ENCODE measurements at regions of chr2 and their contacts with region 1.

Region 1: DNA sequence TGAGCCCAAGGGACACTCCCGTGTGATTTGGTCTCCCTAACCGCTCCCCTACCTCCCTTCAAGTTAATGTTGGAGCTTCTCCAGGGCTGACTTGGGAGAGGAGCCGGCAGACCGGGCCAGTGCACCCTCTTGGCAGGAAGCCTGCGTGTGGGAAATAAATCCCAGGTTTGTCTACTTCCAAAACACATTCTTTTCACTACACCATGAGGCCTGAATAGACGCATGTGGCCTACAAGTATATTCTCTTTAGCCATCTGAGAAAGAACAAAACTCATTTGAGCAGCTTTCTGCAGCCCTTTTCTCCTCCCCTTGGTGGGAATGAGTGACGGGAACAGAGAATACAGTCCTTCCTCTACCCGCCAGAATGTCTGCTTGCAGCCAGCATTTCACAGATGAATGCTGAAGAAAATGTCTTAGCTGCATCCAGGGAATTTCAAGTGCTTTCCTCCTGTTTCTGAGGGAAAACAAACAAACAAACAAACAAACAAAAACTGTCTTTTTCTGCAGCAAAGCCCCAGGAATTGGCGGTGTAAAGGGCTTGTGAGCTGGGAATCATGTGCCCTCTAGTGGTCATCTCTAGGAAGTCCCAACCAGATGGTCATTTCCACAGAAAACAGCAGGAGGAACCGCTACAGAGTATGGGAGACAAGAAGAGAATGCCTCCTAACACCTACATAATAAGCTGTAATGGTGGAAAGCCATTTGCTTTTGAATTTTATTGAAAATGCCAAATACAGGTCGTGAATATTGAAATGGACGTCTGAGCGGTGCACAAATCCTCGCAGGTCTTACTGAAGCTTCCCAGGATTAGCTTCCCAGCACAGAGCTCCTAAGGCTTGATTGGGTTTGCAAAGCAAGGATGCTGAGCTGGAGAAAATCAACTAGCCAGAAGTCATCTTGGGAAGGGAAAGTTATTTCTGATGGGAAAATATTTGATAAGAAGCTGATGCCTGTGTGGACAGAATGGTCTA is 41.2 kb upstream of the DAPL1 start:
- DNase-seq: peak; percentile 71
- H3K4me3 ChIP-seq: peak overlapping the region in 1 of 2 experiments; percentile 27; a peak in 1 of 4 replicates
- H3K27ac ChIP-seq: no peak overlapping the region
- H3K4me1 ChIP-seq: 0 out of 4 replicates have a peak, but pooled peaks cover 0 to 2% of the 10 kb centered on the region in 2 experiments
- H3K27me3 ChIP-seq: peaks cover 5% of the 10 kb centered on the region; the same call in 1 of the 2 replicates
- CTCF ChIP-seq: peak; percentile 91
- EP300 ChIP-seq: no peak
- RAD21 ChIP-seq: peak; percentile 92

Region 2: DNA sequence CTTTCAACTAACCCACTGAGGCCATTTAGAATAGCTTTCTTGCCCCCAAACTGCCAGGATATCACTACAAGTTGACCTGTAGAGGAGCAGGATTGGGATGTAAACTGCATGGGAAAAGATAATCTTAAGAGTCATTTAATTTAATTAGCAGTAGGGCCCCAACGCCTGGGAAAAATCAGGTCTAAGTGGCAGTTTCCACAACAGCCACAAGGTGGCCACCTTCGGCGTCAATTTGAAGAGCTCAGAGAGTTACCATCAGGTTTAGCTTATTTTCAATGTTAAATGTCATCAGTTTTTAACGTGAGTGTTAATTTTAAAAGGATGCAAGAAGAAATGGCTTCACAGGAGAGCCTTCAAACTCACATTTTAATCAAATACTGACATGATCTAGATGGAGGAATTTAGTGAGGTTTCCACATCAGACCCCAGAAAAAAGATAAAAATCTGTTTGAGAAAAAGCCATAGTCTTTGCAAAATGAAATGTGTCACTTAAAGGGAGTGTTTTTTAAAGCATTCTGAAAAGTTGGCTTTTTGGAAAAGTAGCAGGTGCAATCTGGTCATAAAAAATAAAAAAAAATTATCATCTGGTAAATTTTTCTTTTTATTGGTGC is 729.5 kb before region 1 on chr2:
- CTCF ChIA-PET with region 1: interaction called, 256 read pairs
- POLR2A ChIA-PET with region 1: no interaction called
- DNase-seq: peak; percentile 55
- H3K4me3 ChIP-seq: no peak overlapping the region; a peak in 1 of 4 replicates
- H3K27ac ChIP-seq: no peak overlapping the region
- H3K4me1 ChIP-seq: peaks cover 0 to 10% of the 10 kb centered on the region in 2 experiments; a peak in 1 of 4 replicates
- H3K27me3 ChIP-seq: no peaks in the 10 kb centered on the region
- CTCF ChIP-seq: peak; percentile 93
- EP300 ChIP-seq: no peak
- RAD21 ChIP-seq: peak; percentile 83

Region 3: DNA sequence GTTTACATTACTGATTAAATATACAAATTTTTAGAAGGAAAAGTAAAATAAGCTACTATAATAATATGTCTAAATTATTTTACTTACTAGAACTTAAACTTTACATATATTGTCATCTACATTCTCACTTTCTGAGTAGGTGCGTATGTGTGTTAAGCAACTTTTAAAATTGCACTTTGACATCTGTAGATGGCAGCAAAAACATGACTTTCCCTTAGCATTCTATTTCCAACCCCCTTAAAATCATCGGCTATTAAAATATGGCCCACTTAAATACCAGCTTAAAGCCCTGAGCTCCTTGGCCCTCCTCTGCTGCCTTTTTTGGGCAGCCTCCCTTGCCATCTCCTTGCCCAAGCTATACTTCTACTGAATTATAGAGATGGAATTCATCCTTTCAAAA is 574.3 kb before region 1 on chr2:
- CTCF ChIA-PET with region 1: interaction called, 68 read pairs
- POLR2A ChIA-PET with region 1: no interaction called
- DNase-seq: no peak
- H3K4me3 ChIP-seq: no peak overlapping the region
- H3K27ac ChIP-seq: no peak overlapping the region
- H3K4me1 ChIP-seq: peaks cover 0 to 2% of the 10 kb centered on the region in 2 experiments; a peak in 2 of 4 replicates
- H3K27me3 ChIP-seq: no peaks in the 10 kb centered on the region
- CTCF ChIP-seq: peak; percentile 47
- EP300 ChIP-seq: no peak
- RAD21 ChIP-seq: peak; percentile 79

Region 4: GRCh38 chr2:158686210-158686691 is 67.7 kb before region 1 on chr2:
- CTCF ChIA-PET with region 1: interaction called, 13 read pairs
- POLR2A ChIA-PET with region 1: no interaction called
- DNase-seq: peak; percentile 36
- H3K4me3 ChIP-seq: no peak overlapping the region
- H3K27ac ChIP-seq: 0 out of 4 replicates have a peak overlapping the region, but pooled peaks of 1 of the 2 experiments have one; percentile 39
- H3K4me1 ChIP-seq: peaks cover 0 to 6% of the 10 kb centered on the region in 2 experiments; a peak in 1 of 4 replicates
- H3K27me3 ChIP-seq: no peaks in the 10 kb centered on the region
- CTCF ChIP-seq: no peak
- EP300 ChIP-seq: no peak
- RAD21 ChIP-seq: 0 out of 2 replicates have a peak, but pooled peaks have one; percentile 8

Region 5: GRCh38 chr2:158701101-158701500 is 52.8 kb before region 1 on chr2:
- CTCF ChIA-PET with region 1: no interaction called
- POLR2A ChIA-PET with region 1: no interaction called
- DNase-seq: no peak
- H3K4me3 ChIP-seq: no peak overlapping the region
- H3K27ac ChIP-seq: no peak overlapping the region
- H3K4me1 ChIP-seq: no peaks in the 10 kb centered on the region
- H3K27me3 ChIP-seq: no peaks in the 10 kb centered on the region; the same call in 1 of the 2 replicates
- CTCF ChIP-seq: no peak
- EP300 ChIP-seq: no peak
- RAD21 ChIP-seq: no peak

Region 6: DNA sequence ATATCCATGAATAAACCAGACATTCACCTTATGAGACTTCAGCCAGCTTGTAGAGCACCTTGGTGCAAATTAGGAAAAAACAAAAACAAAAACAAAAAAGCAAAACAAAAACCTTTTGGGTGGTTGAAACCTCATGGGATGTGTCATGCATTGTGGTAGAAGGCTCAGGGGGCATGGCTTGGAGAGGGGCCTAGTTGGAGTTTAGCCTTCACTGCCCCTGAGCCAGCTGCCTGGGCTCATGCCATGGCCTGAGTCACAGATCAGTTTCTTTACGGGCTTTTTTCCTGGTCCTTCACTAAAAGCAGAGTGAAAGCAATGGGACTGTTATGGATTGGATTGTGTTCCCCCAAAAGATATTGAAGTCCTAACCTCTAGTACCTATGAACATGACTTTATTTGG is 19.2 kb after region 1 on chr2:
- CTCF ChIA-PET with region 1: interaction called, 94 read pairs
- POLR2A ChIA-PET with region 1: no interaction called
- DNase-seq: no peak
- H3K4me3 ChIP-seq: no peak overlapping the region
- H3K27ac ChIP-seq: no peak overlapping the region
- H3K4me1 ChIP-seq: no peaks in the 10 kb centered on the region
- H3K27me3 ChIP-seq: no peaks in the 10 kb centered on the region
- CTCF ChIP-seq: no peak
- EP300 ChIP-seq: no peak
- RAD21 ChIP-seq: no peak

Region 7: GRCh38 chr2:158879229-158879916 is 125.4 kb after region 1 on chr2:
- CTCF ChIA-PET with region 1: no interaction called
- POLR2A ChIA-PET with region 1: no interaction called
- DNase-seq: no peak
- H3K4me3 ChIP-seq: no peak overlapping the region
- H3K27ac ChIP-seq: no peak overlapping the region
- H3K4me1 ChIP-seq: no peaks in the 10 kb centered on the region
- H3K27me3 ChIP-seq: no peaks in the 10 kb centered on the region
- CTCF ChIP-seq: no peak
- EP300 ChIP-seq: no peak
- RAD21 ChIP-seq: no peak

Measured in SK-N-SH (cell line).